ENCODE measurements at regions of chr12 and their contacts with region 1.

Region 1: DNA sequence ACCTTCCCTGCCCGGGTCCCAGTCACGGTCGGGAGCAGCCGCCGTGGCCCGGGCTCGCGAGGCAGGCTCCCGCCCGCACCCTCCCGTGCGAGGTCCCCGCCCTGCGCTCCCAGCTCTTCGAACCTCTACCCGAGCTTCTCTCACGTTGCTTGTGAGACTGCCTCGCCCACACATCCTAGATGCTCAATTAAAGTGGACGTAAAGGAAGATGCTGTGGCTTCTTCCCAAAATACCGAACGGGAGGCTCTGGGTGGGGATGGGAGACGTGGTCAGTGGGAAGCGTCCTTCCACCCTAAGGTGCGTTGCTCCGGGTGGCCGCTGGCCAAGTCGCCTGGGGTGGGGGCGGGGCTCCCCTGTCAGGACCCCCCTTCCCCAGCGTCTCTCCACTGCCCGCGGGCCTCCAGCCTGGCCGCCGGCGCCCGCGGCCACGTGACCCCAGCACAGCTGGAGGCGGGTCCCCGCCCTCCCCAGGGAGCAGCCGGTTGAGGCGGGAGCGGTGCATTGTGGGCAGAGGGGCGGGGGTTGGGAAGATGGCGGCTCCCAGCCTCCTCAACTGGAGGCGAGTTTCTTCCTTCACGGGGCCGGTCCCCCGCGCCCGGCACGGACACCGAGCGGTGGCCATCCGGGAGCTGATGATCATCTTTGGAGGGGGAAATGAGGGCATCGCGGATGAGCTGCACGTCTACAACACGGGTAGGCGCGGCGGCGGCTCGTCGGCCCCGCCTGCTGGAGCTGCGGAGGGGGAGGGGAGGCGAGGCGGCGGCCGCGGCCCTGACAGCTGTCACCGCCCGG is at the start of gene HCFC2:
- DNase-seq: peak; percentile 95
- ATAC-seq: peak; percentile 95
- H3K4me3 Mint-ChIP-seq: peak within 1 kb of the TSS; percentile 85
- H3K27ac Mint-ChIP-seq: peak within 1 kb of the TSS; percentile 89
- H3K4me1 Mint-ChIP-seq: peaks cover 20% of the 10 kb centered on the region
- H3K27me3 Mint-ChIP-seq: peaks cover 7% of the 10 kb centered on the region
- total RNA-seq, gene HCFC2: 6.4 to 6.5 TPM

Region 2: DNA sequence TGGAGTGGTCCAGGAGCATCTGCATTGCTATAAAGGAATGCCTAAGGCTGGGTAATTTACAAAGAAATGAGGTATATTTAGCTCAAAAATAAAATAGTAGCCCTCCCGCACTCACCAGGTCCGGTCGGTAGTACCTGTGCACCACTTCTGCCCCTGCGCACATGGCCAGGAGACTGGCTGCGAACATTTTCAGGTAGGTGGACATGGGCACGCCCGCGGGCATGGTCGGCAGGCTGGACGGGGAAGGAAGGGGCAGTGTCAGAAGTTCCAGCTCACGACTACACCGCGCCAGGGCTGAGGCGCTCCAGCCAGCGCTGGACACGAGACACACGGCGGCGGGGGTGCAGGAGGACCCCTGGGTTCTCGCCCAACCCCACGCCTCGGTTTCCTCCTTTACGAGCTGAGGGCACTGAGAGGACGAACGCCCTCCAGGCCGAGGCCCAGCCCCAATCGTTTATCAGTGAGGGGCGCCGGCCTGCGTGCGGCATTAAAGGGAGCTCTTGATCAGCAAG is 107.7 kb before region 1 on chr12:
- CTCF ChIA-PET with region 1: no interaction called
- POLR2A ChIA-PET with region 1: no interaction called
- intact Hi-C with region 1: loop called in 1 of 2 experiments (anchors 1 kb)
- DNase-seq: no peak
- ATAC-seq: peak; percentile 0
- H3K4me3 Mint-ChIP-seq: peak overlapping the region; percentile 95
- H3K27ac Mint-ChIP-seq: peak overlapping the region; percentile 94
- H3K4me1 Mint-ChIP-seq: peaks cover 45% of the 10 kb centered on the region
- H3K27me3 Mint-ChIP-seq: no peaks in the 10 kb centered on the region

Region 3: DNA sequence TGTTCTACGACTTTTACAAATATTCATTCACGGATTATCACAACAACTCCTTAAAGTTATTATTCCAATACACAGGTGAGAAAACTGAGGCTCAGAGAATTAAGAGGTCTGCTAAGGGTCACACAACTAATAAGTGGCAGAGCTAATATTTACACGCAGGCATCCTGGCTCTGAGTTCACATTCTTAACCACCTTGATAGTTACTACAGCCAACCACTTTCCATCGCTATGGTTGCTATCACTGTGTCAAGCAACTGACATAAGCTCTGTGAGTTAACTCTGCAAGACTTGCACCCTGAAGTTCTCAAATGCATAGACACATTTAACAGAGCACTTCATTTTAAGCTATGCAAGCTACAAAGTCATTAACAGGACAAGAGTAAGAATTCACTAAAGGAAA is 17.9 kb before region 1 on chr12:
- CTCF ChIA-PET with region 1: no interaction called
- POLR2A ChIA-PET with region 1: no interaction called
- intact Hi-C with region 1: no loop called
- DNase-seq: no peak
- ATAC-seq: no peak
- H3K4me3 Mint-ChIP-seq: no peak overlapping the region
- H3K27ac Mint-ChIP-seq: no peak overlapping the region
- H3K4me1 Mint-ChIP-seq: peaks cover 8% of the 10 kb centered on the region
- H3K27me3 Mint-ChIP-seq: peaks cover 18% of the 10 kb centered on the region

Region 4: GRCh38 chr12:104083769-104084475 is 19.7 kb after region 1 on chr12:
- CTCF ChIA-PET with region 1: interaction called, 18 read pairs
- POLR2A ChIA-PET with region 1: interaction called, 8 read pairs
- intact Hi-C with region 1: loop called in 1 of 2 experiments (anchors 1 kb)
- DNase-seq: peak; percentile 74
- ATAC-seq: peak; percentile 94
- H3K4me3 Mint-ChIP-seq: no peak overlapping the region
- H3K27ac Mint-ChIP-seq: peak overlapping the region; percentile 14
- H3K4me1 Mint-ChIP-seq: peaks cover 17% of the 10 kb centered on the region
- H3K27me3 Mint-ChIP-seq: no peaks in the 10 kb centered on the region

Region 5: DNA sequence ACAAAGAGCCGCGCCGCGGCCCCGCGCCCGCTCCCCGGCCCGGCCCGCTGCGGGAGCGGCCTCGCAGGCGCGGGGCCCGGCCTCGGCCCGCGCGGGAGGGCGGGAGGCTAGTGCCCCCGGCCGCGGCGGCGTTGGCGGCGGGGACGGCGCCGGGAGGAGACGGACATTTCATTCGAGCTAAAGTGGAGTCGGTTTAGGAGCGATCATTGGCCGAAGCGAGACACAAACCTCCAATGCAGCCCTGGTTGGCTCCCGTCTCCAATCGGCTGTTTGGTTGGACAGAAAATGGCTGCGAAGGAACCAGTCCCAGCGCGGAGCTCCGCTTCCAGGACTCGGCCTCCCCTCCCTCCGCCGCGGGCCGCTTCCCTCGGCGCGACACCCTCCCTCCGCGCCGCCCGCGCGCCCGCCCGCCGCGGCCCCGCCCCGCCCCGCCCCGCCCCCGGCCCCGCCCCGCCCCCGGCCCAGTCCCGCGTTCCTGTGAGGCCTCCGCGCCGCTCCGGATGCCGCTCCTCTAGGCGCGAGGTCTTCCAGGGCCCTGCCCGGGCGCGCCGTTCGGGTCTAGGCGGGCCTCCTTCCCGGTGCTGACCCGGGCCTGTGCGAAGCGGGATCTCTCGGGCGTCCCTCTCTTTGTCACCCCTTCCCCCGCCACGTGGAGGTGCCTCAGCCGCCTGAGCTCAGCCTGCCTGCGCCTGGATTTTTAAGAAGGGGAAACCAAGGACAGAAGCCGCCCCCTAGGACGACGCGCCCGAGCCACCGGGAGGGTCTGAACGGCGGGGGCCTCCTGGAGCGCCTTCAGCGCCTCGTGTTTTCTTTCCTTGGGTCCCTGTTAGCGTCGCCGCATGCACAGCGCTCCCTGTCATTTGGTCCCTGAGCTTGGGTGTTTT is 73.9 kb after region 1 on chr12 and contains the start of gene NFYB:
- CTCF ChIA-PET with region 1: no interaction called
- POLR2A ChIA-PET with region 1: interaction called, 10 read pairs
- intact Hi-C with region 1: loop called in 1 of 2 experiments (anchors 1 kb)
- DNase-seq: peak; percentile 95
- ATAC-seq: peak; percentile 98
- H3K4me3 Mint-ChIP-seq: peak within 1 kb of the TSS; percentile 83
- H3K27ac Mint-ChIP-seq: peak within 1 kb of the TSS; percentile 90
- H3K4me1 Mint-ChIP-seq: peaks cover 19% of the 10 kb centered on the region
- H3K27me3 Mint-ChIP-seq: no peaks in the 10 kb centered on the region
- total RNA-seq, gene NFYB: 18.8 to 27.2 TPM

Region 6: GRCh38 chr12:104286538-104287482 is 222.6 kb after region 1 on chr12:
- CTCF ChIA-PET with region 1: interaction called, 4 read pairs
- POLR2A ChIA-PET with region 1: no interaction called
- intact Hi-C with region 1: loop called (anchors 5 to 10 kb)
- DNase-seq: peak; percentile 95
- ATAC-seq: peak; percentile 84
- H3K4me3 Mint-ChIP-seq: peak overlapping the region; percentile 95
- H3K27ac Mint-ChIP-seq: peak overlapping the region; percentile 97
- H3K4me1 Mint-ChIP-seq: peaks cover 12% of the 10 kb centered on the region
- H3K27me3 Mint-ChIP-seq: no peaks in the 10 kb centered on the region

Region 7: GRCh38 chr12:104303538-104304151 is 239.4 kb after region 1 on chr12 and contains the start of gene EID3:
- CTCF ChIA-PET with region 1: no interaction called
- POLR2A ChIA-PET with region 1: no interaction called
- intact Hi-C with region 1: loop called in 1 of 2 experiments (anchors 5 kb)
- DNase-seq: peak; percentile 95
- ATAC-seq: peak; percentile 97
- H3K4me3 Mint-ChIP-seq: peak within 1 kb of the TSS; percentile 81
- H3K27ac Mint-ChIP-seq: peak within 1 kb of the TSS; percentile 96
- H3K4me1 Mint-ChIP-seq: peaks cover 57% of the 10 kb centered on the region
- H3K27me3 Mint-ChIP-seq: no peaks in the 10 kb centered on the region
- total RNA-seq, gene EID3: 3.9 to 4.6 TPM

Region 8: GRCh38 chr12:104427011-104427461 is 362.8 kb after region 1 on chr12:
- CTCF ChIA-PET with region 1: no interaction called
- POLR2A ChIA-PET with region 1: no interaction called
- intact Hi-C with region 1: no loop called
- DNase-seq: no peak
- ATAC-seq: peak; percentile 39
- H3K4me3 Mint-ChIP-seq: no peak overlapping the region
- H3K27ac Mint-ChIP-seq: no peak overlapping the region
- H3K4me1 Mint-ChIP-seq: peaks cover 4% of the 10 kb centered on the region
- H3K27me3 Mint-ChIP-seq: no peaks in the 10 kb centered on the region

Region 9: DNA sequence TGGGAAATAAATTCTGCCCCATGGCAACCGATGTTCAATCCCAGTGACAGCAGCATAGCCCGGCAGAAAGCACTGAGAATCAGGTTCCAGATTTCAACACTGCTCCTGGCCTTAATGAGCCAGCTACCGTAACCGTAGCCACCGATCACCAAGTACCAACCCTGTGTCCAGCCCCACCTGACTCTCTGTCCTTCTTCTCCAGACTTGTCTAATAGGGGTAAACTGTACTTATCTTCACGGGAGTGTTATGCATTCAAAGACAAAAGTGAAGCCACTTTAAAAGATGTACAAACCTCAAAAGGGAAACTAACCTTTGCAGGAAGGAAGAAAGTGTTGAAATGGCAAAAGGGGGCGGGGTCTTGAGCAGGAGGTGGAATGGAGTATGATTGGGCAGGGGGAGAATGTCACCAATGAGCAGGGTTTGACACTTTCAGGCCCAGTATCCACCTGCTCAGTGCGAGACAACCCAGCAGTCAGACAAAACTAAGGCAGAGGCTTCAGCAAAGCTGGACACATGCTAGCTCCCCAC is 618.6 kb after region 1 on chr12:
- CTCF ChIA-PET with region 1: no interaction called
- POLR2A ChIA-PET with region 1: no interaction called
- intact Hi-C with region 1: no loop called
- DNase-seq: peak; percentile 88
- ATAC-seq: peak; percentile 82
- H3K4me3 Mint-ChIP-seq: peak overlapping the region; percentile 76
- H3K27ac Mint-ChIP-seq: peak overlapping the region; percentile 93
- H3K4me1 Mint-ChIP-seq: peaks cover 76% of the 10 kb centered on the region
- H3K27me3 Mint-ChIP-seq: no peaks in the 10 kb centered on the region

Measured in activated CD4-positive, alpha-beta T cell treated with anti-CD3 and anti-CD28 coated beads for 36 hours (primary cell).